HEK293 (cell line): ENCODE measurements at regions of chr1 and their contacts with region 1.

Region 1: DNA sequence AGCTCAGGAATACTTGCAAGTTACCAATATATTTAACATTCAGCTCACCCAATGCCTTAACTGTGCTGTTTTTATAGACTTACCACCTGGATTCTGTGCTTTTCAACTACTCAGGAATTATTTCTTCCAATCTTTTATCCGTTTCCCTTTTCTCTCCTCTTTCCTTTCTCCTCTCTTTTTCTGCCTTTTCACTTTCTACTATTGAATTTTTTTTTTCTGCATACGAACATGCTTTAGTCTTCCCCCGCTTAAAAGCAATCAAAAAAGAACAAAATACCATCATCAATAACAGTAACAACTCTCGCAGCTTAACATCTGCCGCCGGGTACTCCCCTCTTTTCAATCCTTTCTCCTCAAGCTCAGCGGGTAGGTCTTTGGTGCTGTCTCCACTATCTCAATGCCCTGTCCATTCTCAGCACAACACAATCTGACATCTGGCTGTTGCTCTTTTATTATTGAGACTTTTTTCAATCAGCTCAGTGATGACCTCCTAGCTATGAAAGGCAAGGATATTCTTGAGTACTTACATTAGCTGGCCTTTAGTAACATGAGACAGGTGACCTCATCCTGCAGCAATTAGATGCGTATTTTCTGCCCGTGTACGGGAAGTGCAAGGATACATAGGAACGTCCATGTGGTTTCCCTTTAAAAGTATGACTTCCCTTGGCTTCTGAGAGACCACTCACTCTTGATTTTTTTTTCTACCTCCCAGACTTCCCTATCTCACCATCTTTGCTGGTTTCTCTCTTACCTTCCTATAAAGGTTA is 40.2 kb upstream of the SIPA1L2 start:
- H3K4me3 ChIP-seq: no peak overlapping the region
- H3K27ac ChIP-seq: no peak overlapping the region; the same call in 1 of the 2 replicates
- H3K4me1 ChIP-seq: peaks cover 9% of the 10 kb centered on the region; the same call in 1 of the 2 replicates
- CTCF ChIP-seq: no peak

Region 2: DNA sequence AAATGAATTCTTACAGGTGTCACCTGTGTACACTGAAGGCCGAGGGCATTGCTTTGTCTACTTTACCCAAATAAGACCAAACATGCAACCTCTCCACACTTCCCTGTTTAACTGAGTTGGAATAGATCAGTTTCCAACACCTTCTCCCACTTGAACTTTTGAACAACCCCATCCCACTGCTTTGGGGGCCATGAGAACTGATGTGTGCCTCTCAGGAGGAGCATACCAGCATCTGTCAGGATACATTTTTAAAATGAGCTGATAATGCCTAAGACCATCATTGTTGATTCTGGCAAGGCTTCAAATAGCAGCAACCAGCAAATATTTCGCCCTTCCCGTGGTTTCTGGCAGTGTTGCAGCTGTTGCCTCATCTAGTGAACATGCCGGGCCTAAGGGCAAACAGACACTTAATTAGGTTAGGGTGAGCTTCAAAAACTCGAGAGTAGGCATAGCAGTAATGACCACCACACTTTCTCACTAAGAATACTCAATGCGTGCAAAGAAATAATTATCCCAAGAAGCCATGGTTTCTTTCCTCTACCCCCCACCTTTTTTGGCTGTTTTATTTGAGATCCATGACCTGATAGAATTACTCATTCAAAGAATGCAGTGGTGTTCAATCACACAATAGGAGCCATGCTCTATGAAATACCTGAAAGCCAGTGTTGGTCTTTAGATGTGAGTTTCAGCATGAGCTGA is 198.8 kb after region 1 on chr1:
- CTCF ChIA-PET with region 1: no interaction called
- POLR2A ChIA-PET with region 1: interaction called, 13 read pairs
- H3K4me3 ChIP-seq: no peak overlapping the region
- H3K27ac ChIP-seq: peak overlapping the region; percentile 76
- H3K4me1 ChIP-seq: peaks cover 11% of the 10 kb centered on the region
- CTCF ChIP-seq: no peak; the same call in 1 of the 2 replicates

Region 3: DNA sequence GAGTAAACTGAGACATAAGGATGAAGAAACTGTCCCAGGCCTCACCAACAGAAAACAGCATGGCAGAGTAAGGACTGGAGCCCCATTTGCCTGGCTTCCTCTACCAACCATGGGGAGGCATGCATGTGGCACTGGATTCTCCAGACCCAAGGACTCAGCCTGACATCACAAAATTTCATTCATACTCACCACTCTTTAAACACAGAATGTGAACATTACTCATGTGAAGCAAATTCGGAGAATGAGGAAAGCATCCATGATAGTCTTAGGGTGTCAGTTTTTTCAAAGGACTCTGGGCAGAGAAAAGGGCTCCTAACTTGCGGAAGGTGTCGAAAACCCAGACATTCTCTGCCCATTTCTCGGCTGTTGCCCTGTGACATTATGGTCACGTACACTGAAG is 541.4 kb after region 1 on chr1:
- CTCF ChIA-PET with region 1: interaction called, 10 read pairs
- POLR2A ChIA-PET with region 1: no interaction called
- H3K4me3 ChIP-seq: no peak overlapping the region
- H3K27ac ChIP-seq: no peak overlapping the region
- H3K4me1 ChIP-seq: peaks cover 10% of the 10 kb centered on the region; the same call in 1 of the 2 replicates
- CTCF ChIP-seq: no peak